Motor neuron (in vitro differentiated cells): ENCODE measurements at regions of chr7 and their contacts with region 1.

Region 1: GRCh38 chr7:114085592-114086501 is 167.0 kb upstream of the PPP1R3A start:
- ATAC-seq: peak; percentile 60 to 82 (median 75)
- H3K4me3 ChIP-seq: peak overlapping the region; percentile 44 to 92 (median 53)
- H3K27ac ChIP-seq: no peak overlapping the region
- H3K4me1 ChIP-seq: peaks cover 5 to 16% of the 10 kb centered on the region in 2 donors

Region 2: GRCh38 chr7:113824117-113824823 is 261.6 kb before region 1 on chr7:
- in situ Hi-C with region 1: no loop called
- ATAC-seq: peak in 2 of 8 experiments; percentile 17 to 30
- H3K4me3 ChIP-seq: no peak overlapping the region
- H3K27ac ChIP-seq: no peak overlapping the region
- H3K4me1 ChIP-seq: no peaks in the 10 kb centered on the region

Region 3: GRCh38 chr7:113912876-113913275 is 173.0 kb before region 1 on chr7:
- in situ Hi-C with region 1: no loop called
- ATAC-seq: no peak
- H3K4me3 ChIP-seq: no peak overlapping the region
- H3K27ac ChIP-seq: no peak overlapping the region
- H3K4me1 ChIP-seq: no peaks in the 10 kb centered on the region

Region 4: GRCh38 chr7:114175125-114175524 is 89.3 kb after region 1 on chr7:
- in situ Hi-C with region 1: no loop called
- ATAC-seq: no peak
- H3K4me3 ChIP-seq: no peak overlapping the region
- H3K27ac ChIP-seq: no peak overlapping the region
- H3K4me1 ChIP-seq: no peaks in the 10 kb centered on the region

Region 5: DNA sequence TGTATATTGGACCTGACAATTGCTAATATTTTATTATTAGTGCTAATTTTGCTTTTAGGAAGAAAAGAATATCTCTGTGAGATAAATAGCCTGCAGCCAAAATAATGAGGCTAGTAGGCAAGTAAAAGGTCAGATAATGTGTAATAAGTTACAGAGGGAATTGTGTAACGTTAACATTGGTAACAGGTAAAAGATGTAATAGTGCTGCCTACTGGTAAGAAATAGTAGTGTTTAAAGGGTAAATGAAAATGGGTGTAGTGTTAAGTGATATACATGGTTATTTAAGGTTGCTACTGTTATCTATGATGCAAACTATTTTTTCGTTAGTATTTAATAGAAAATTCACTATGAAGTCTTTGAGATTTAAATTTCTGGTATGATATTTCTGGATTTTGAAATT is 319.6 kb after region 1 on chr7:
- in situ Hi-C with region 1: loop called in 2 of 9 experiments (anchors 10 to 25 kb)
- ATAC-seq: peak in 3 of 8 experiments; percentile 26 to 56 (median 46)
- H3K4me3 ChIP-seq: no peak overlapping the region
- H3K27ac ChIP-seq: no peak overlapping the region
- H3K4me1 ChIP-seq: no peaks in the 10 kb centered on the region

Region 6: GRCh38 chr7:114414156-114415063 is 328.6 kb after region 1 on chr7 and contains the start of gene FOXP2:
- in situ Hi-C with region 1: loop called in 2 of 9 experiments (anchors 10 to 25 kb)
- ATAC-seq: peak; percentile 39 to 71 (median 49)
- H3K4me3 ChIP-seq: peak within 1 kb of the TSS; percentile 33 to 41 (median 35)
- H3K27ac ChIP-seq: peak within 1 kb of the TSS; percentile 13 to 57
- H3K4me1 ChIP-seq: peaks cover 46 to 62% of the 10 kb centered on the region in 2 donors
- total RNA-seq, gene FOXP2: 1.1 to 10.3 (median 6.7) TPM

Region 7: GRCh38 chr7:114663502-114663901 is 577.7 kb after region 1 on chr7:
- in situ Hi-C with region 1: loop called in 1 of 9 experiments (anchors 25 kb)
- ATAC-seq: peak in 4 of 8 experiments; percentile 13 to 64 (median 42)
- H3K4me3 ChIP-seq: no peak overlapping the region
- H3K27ac ChIP-seq: no peak overlapping the region
- H3K4me1 ChIP-seq: peaks cover 22 to 39% of the 10 kb centered on the region in 2 donors